Breast epithelium (tissue), 4 donors: ENCODE measurements at regions of chr3 and their contacts with region 1.

Region 1: GRCh38 chr3:65473736-65474135 is 565.0 kb downstream of the MAGI1 start:
- DNase-seq: no peak
- H3K4me3 ChIP-seq: no peak overlapping the region
- H3K27ac ChIP-seq: no peak overlapping the region
- H3K4me1 ChIP-seq: no peaks in the 10 kb centered on the region
- H3K27me3 ChIP-seq: no peaks in the 10 kb centered on the region
- CTCF ChIP-seq: no peak
- POLR2A ChIP-seq: no peak

Region 2: GRCh38 chr3:65433480-65433879 is 40.3 kb before region 1 on chr3:
- intact Hi-C with region 1: loop called (anchors 2 kb)
- DNase-seq: no peak
- H3K4me3 ChIP-seq: no peak overlapping the region
- H3K27ac ChIP-seq: no peak overlapping the region
- H3K4me1 ChIP-seq: no peaks in the 10 kb centered on the region
- H3K27me3 ChIP-seq: no peaks in the 10 kb centered on the region
- CTCF ChIP-seq: no peak
- POLR2A ChIP-seq: no peak

Region 3: GRCh38 chr3:65526656-65527055 is 52.9 kb after region 1 on chr3:
- intact Hi-C with region 1: loop called (anchors 2 kb)
- DNase-seq: no peak
- H3K4me3 ChIP-seq: no peak overlapping the region
- H3K27ac ChIP-seq: no peak overlapping the region
- H3K4me1 ChIP-seq: no peaks in the 10 kb centered on the region
- H3K27me3 ChIP-seq: no peaks in the 10 kb centered on the region
- CTCF ChIP-seq: no peak
- POLR2A ChIP-seq: no peak

Region 4: DNA sequence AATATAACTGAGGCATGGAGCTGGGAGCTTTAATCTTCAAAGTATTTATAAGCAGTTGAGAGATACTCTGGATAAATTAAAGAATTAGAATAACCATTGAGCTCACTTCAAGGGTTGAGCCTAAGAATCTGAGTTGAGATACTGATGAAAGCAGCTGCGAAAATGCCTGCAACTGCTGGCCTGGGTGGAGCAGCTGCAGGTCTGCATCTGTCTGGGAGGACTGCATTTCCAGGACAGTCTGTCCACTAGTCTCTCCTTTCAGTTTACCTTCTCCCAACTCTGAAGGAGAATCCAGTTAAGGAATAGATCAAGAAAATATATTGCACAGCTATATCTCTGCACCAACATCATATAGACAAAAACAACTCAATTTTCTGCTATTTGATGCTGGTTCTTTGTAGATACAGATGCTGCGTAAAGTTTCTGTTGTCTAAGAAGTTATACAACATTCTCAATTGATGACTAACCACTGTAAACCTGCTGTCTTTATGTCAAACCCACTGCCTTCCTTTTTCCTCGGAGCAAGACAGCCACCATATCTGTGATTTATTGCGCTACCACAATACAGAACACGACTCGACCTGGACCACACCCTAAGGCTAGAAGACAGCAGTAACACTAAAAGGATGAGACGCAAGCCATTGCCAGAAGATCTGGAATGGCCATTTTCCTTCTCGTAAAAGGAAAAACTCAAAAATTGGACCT is 319.9 kb after region 1 on chr3:
- intact Hi-C with region 1: no loop called
- DNase-seq: no peak
- H3K4me3 ChIP-seq: no peak overlapping the region
- H3K27ac ChIP-seq: no peak overlapping the region
- H3K4me1 ChIP-seq: no peaks in the 10 kb centered on the region
- H3K27me3 ChIP-seq: no peaks in the 10 kb centered on the region
- CTCF ChIP-seq: no peak
- POLR2A ChIP-seq: no peak